Right ventricle myocardium inferior (tissue), 1 donor: ENCODE measurements at regions of chr11 and their contacts with region 1.

Region 1: GRCh38 chr11:34492806-34493414 is 20.7 kb downstream of the ELF5 start:
- DNase-seq: no peak
- ATAC-seq: no peak

Region 2: DNA sequence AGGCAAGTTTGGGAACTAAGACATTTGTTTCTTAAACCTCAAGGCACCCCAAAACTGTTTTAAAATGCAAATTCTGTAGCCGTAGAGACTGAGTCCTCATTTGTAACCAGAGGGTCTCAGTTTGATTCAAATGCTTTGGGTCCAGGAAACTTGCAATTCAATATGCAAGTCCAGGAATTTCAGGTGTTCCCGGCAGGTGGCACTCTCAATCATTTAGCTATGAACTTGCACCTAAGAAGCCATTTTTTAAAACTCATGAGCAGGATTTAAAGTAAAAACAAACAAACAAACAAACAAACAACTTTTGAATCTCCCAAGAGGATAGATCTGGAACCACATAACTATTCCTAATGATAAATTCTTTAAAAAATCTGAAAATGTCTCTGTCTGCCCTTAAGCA is 126.4 kb before region 1 on chr11:
- intact Hi-C with region 1: loop called (anchors 2 kb)
- DNase-seq: no peak
- ATAC-seq: no peak

Region 3: GRCh38 chr11:34427186-34427805 is 65.6 kb before region 1 on chr11:
- intact Hi-C with region 1: no loop called
- DNase-seq: no peak
- ATAC-seq: peak; percentile 48